ENCODE measurements at regions of chr4 and their contacts with region 1.

Region 1: DNA sequence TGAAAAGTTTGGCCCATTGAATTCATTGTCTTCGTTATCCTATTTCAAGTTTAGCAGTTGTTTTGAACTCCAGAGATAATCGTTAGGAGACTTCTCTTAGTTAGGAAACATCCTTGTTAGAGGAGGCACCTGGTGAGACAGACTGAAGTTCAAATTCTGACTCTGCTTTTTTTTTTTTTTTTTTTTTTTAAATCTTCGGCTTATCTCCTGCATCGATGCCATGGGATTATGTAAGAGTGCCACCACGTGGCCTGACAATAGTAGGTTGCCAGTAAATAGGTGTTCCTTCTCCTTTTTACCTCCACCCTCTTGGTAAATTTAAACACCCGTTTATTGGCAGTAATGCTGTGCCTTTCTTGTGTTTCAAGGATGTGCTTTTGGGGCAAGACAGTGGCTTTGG is 149.3 kb downstream of the SOWAHB start:
- DNase-seq: peak; percentile 57
- H3K4me3 ChIP-seq: no peak overlapping the region
- H3K27ac ChIP-seq: no peak overlapping the region
- H3K4me1 ChIP-seq: peaks cover 24% of the 10 kb centered on the region
- H3K27me3 ChIP-seq: no peaks in the 10 kb centered on the region
- CTCF ChIP-seq: peak; percentile 28 to 35
- POLR2A ChIP-seq: no peak

Region 2: GRCh38 chr4:76430519-76431388 is 317.9 kb before region 1 on chr4:
- CTCF ChIA-PET with region 1: interaction called, 3 read pairs
- POLR2A ChIA-PET with region 1: no interaction called
- dilution Hi-C with region 1: no loop called
- intact Hi-C with region 1: loop called (anchors 2 kb)
- DNase-seq: peak; percentile 61
- H3K4me3 ChIP-seq: no peak overlapping the region
- H3K27ac ChIP-seq: no peak overlapping the region
- H3K4me1 ChIP-seq: no peaks in the 10 kb centered on the region
- H3K27me3 ChIP-seq: peaks cover 14 to 26% of the 10 kb centered on the region in 2 experiments
- CTCF ChIP-seq: peak; percentile 39
- POLR2A ChIP-seq: no peak

Region 3: GRCh38 chr4:76511947-76512346 is 236.7 kb before region 1 on chr4:
- CTCF ChIA-PET with region 1: interaction called, 8 read pairs
- POLR2A ChIA-PET with region 1: no interaction called
- dilution Hi-C with region 1: no loop called
- intact Hi-C with region 1: loop called (anchors 1 kb)
- DNase-seq: no peak
- H3K4me3 ChIP-seq: no peak overlapping the region
- H3K27ac ChIP-seq: no peak overlapping the region
- H3K4me1 ChIP-seq: no peaks in the 10 kb centered on the region
- H3K27me3 ChIP-seq: no peaks in the 10 kb centered on the region
- CTCF ChIP-seq: no peak
- POLR2A ChIP-seq: no peak

Region 4: GRCh38 chr4:76589872-76590797 is 158.5 kb before region 1 on chr4:
- CTCF ChIA-PET with region 1: interaction called, 5 read pairs
- POLR2A ChIA-PET with region 1: no interaction called
- dilution Hi-C with region 1: no loop called
- intact Hi-C with region 1: loop called (anchors 2 kb)
- DNase-seq: no peak
- H3K4me3 ChIP-seq: no peak overlapping the region
- H3K27ac ChIP-seq: no peak overlapping the region
- H3K4me1 ChIP-seq: no peaks in the 10 kb centered on the region
- H3K27me3 ChIP-seq: no peaks in the 10 kb centered on the region
- CTCF ChIP-seq: no peak
- POLR2A ChIP-seq: no peak

Region 5: GRCh38 chr4:76634239-76634638 is 114.4 kb before region 1 on chr4:
- CTCF ChIA-PET with region 1: no interaction called
- POLR2A ChIA-PET with region 1: no interaction called
- dilution Hi-C with region 1: no loop called
- intact Hi-C with region 1: loop called (anchors 5 kb)
- DNase-seq: peak; percentile 37
- H3K4me3 ChIP-seq: peak overlapping the region in 1 of 3 experiments; percentile 24
- H3K27ac ChIP-seq: peak overlapping the region; percentile 38
- H3K4me1 ChIP-seq: peaks cover 24% of the 10 kb centered on the region
- H3K27me3 ChIP-seq: no peaks in the 10 kb centered on the region
- CTCF ChIP-seq: no peak
- POLR2A ChIP-seq: no peak

Region 6: DNA sequence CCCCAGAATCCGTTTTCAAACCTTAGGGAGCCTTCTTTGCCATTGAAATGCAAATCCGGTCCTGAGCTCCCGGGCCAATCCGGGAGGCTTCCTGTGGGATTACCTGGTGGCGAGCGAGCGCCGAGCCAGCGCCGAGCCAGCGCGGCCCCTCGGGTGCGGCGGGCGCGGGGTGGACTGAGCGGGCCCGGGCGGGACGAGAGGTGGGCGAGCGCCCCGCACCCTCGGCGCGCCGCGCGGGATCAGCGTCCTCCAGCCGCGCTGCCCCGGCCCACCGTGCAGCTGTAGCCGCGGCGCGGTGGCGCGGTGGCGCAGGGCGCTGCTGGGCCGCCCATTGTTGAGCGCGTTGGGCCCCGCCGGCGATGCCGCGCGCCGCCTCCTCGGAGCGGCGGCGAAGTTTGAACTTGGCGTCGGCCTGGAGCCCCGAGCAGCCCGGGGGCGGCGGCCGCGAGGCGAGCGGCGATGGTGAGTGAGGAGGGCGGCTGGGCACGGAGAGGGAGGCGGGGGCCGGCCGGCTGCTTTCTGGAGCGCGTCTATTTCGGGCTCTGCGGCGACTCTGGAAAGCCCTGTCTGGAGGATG is 59.3 kb before region 1 on chr4:
- CTCF ChIA-PET with region 1: interaction called, 5 read pairs
- POLR2A ChIA-PET with region 1: no interaction called
- dilution Hi-C with region 1: no loop called
- intact Hi-C with region 1: loop called (anchors 2 kb)
- DNase-seq: peak; percentile 40
- H3K4me3 ChIP-seq: peak overlapping the region; percentile 41 to 73 (median 65)
- H3K27ac ChIP-seq: peak overlapping the region; percentile 40
- H3K4me1 ChIP-seq: peaks cover 18% of the 10 kb centered on the region
- H3K27me3 ChIP-seq: no peaks in the 10 kb centered on the region
- CTCF ChIP-seq: no peak
- POLR2A ChIP-seq: no peak

Measured in endothelial cell of umbilical vein (primary cell).